ENCODE measurements at regions of chr1 and their contacts with region 1.

Region 1: GRCh38 chr1:247487057-247487456 is 29.2 kb upstream of the OR2B11 start:
- DNase-seq: peak; percentile 66
- ATAC-seq: peak; percentile 80
- H3K4me3 ChIP-seq: no peak overlapping the region
- H3K4me3 Mint-ChIP-seq: no peak overlapping the region
- H3K27ac ChIP-seq: no peak overlapping the region
- H3K27ac Mint-ChIP-seq: no peak overlapping the region
- H3K4me1 ChIP-seq: no peaks in the 10 kb centered on the region
- H3K4me1 Mint-ChIP-seq: no peaks in the 10 kb centered on the region
- H3K27me3 ChIP-seq: peaks cover 0 to 5% (median 0%) of the 10 kb centered on the region in 4 experiments
- H3K27me3 Mint-ChIP-seq: peaks cover 8% of the 10 kb centered on the region
- CTCF ChIP-seq: peak; percentile 82

Region 2: GRCh38 chr1:246907472-246907871 is 579.6 kb before region 1 on chr1:
- CTCF ChIA-PET with region 1: interaction called, 12 read pairs
- POLR2A ChIA-PET with region 1: no interaction called
- intact Hi-C with region 1: loop called (anchors 10 kb)
- DNase-seq: peak; percentile 50
- ATAC-seq: no peak
- H3K4me3 ChIP-seq: no peak overlapping the region
- H3K4me3 Mint-ChIP-seq: no peak overlapping the region
- H3K27ac ChIP-seq: no peak overlapping the region
- H3K27ac Mint-ChIP-seq: no peak overlapping the region
- H3K4me1 ChIP-seq: no peaks in the 10 kb centered on the region
- H3K4me1 Mint-ChIP-seq: no peaks in the 10 kb centered on the region
- H3K27me3 ChIP-seq: no peaks in the 10 kb centered on the region
- H3K27me3 Mint-ChIP-seq: no peaks in the 10 kb centered on the region
- CTCF ChIP-seq: peak; percentile 69

Region 3: DNA sequence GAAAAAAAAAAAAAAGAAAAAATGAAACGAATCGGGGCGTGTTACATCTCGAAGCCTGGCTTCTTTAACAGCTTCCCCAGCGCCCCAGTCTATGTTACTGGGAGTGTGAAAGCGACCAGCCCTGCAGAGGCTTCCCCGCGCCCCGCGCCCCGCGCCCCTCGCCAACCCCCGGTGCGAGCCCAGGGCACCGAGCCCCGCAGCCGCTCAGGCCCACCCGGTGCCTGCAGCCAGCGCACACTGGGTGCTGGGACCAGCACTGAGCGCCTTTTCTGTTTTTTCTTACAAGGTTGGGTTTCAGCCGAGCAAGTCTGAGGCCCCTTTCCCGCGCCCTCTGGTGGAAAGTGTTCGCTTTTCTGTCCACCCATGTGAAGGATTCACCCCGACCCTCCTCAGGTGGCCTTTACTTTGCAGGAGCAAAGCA is 113.3 kb before region 1 on chr1:
- CTCF ChIA-PET with region 1: interaction called, 235 read pairs
- POLR2A ChIA-PET with region 1: no interaction called
- intact Hi-C with region 1: loop called (anchors 1 kb)
- DNase-seq: peak; percentile 66
- ATAC-seq: peak; percentile 71
- H3K4me3 ChIP-seq: peak overlapping the region in 2 of 5 experiments; percentile 32 to 49
- H3K4me3 Mint-ChIP-seq: peak overlapping the region; percentile 41
- H3K27ac ChIP-seq: no peak overlapping the region
- H3K27ac Mint-ChIP-seq: no peak overlapping the region
- H3K4me1 ChIP-seq: peaks cover 0 to 2% of the 10 kb centered on the region in 2 donors
- H3K4me1 Mint-ChIP-seq: peaks cover 7% of the 10 kb centered on the region
- H3K27me3 ChIP-seq: peaks cover 0 to 9% (median 0%) of the 10 kb centered on the region in 4 experiments
- H3K27me3 Mint-ChIP-seq: peaks cover 20% of the 10 kb centered on the region
- CTCF ChIP-seq: peak; percentile 50

Region 4: DNA sequence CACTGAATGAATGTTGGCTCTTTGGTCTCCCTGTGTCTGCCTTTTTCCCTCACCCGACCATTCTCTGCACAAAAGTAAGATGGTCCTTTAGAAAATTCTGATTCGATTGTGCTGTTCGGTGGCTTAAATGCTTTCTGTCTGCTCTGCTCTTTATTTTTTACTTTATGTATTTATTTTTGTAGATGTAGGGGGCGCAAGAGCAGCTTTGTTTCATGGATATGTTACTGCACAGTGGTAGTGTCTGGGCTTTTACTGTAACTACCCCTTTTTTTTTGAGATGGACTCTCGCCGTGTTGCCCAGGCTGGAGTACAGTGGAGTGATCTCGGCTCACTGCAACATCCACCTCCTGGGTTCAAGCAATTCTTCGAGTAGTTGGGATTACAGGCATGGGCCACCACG is 55.4 kb before region 1 on chr1:
- CTCF ChIA-PET with region 1: interaction called, 11 read pairs
- POLR2A ChIA-PET with region 1: no interaction called
- intact Hi-C with region 1: no loop called
- DNase-seq: no peak
- ATAC-seq: no peak
- H3K4me3 ChIP-seq: no peak overlapping the region
- H3K4me3 Mint-ChIP-seq: no peak overlapping the region
- H3K27ac ChIP-seq: no peak overlapping the region
- H3K27ac Mint-ChIP-seq: no peak overlapping the region
- H3K4me1 ChIP-seq: peaks cover 4 to 12% of the 10 kb centered on the region in 2 donors
- H3K4me1 Mint-ChIP-seq: peaks cover 21% of the 10 kb centered on the region
- H3K27me3 ChIP-seq: no peaks in the 10 kb centered on the region
- H3K27me3 Mint-ChIP-seq: no peaks in the 10 kb centered on the region
- CTCF ChIP-seq: no peak

Region 5: DNA sequence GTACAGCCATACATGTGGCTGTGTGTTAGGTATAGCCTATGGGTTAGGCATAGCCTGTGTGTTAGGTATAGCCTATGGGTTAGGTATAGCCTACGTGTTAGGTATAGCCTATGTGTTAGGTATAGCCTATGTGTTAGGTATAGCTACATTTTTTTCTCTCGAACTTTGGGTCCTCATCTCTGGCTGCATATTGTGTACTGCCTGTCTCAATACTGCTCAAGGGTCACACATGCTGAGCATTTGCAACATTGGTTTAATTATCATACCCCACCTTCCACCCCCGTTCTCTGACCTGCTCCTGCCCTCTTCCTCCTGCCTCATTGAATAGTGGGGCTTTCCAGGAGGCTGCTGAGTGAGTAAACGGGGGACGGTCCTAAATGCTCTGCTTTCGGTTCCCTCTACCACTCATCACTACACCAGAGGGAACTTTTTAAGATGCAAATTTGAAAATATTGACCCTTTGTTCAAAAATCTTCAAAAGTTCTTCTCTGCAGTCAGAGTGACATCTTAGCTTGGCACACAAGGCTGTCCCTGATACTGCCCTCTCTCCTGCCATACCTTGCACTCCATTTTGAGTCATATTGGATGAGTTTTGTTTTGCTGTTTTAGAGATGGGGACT is 46.9 kb before region 1 on chr1:
- CTCF ChIA-PET with region 1: interaction called, 24 read pairs
- POLR2A ChIA-PET with region 1: no interaction called
- intact Hi-C with region 1: no loop called
- DNase-seq: peak; percentile 84
- ATAC-seq: peak; percentile 97
- H3K4me3 ChIP-seq: peak overlapping the region in 1 of 5 experiments; percentile 18
- H3K4me3 Mint-ChIP-seq: peak overlapping the region; percentile 44
- H3K27ac ChIP-seq: peak overlapping the region; percentile 52
- H3K27ac Mint-ChIP-seq: peak overlapping the region; percentile 47
- H3K4me1 ChIP-seq: peaks cover 39 to 46% of the 10 kb centered on the region in 2 donors
- H3K4me1 Mint-ChIP-seq: peaks cover 55% of the 10 kb centered on the region
- H3K27me3 ChIP-seq: no peaks in the 10 kb centered on the region
- H3K27me3 Mint-ChIP-seq: no peaks in the 10 kb centered on the region
- CTCF ChIP-seq: no peak

Region 6: GRCh38 chr1:247471445-247472016 is 15.5 kb before region 1 on chr1:
- CTCF ChIA-PET with region 1: interaction called, 17 read pairs
- POLR2A ChIA-PET with region 1: no interaction called
- intact Hi-C with region 1: no loop called
- DNase-seq: no peak
- ATAC-seq: peak; percentile 84
- H3K4me3 ChIP-seq: no peak overlapping the region
- H3K4me3 Mint-ChIP-seq: peak overlapping the region; percentile 34
- H3K27ac ChIP-seq: no peak overlapping the region
- H3K27ac Mint-ChIP-seq: no peak overlapping the region
- H3K4me1 ChIP-seq: peaks cover 8 to 11% of the 10 kb centered on the region in 2 donors
- H3K4me1 Mint-ChIP-seq: peaks cover 31% of the 10 kb centered on the region
- H3K27me3 ChIP-seq: no peaks in the 10 kb centered on the region
- H3K27me3 Mint-ChIP-seq: no peaks in the 10 kb centered on the region
- CTCF ChIP-seq: no peak

Measured in B cell (primary cell).